GM12878 (cell line): ENCODE measurements at regions of chr1 and their contacts with region 1.

Region 1: DNA sequence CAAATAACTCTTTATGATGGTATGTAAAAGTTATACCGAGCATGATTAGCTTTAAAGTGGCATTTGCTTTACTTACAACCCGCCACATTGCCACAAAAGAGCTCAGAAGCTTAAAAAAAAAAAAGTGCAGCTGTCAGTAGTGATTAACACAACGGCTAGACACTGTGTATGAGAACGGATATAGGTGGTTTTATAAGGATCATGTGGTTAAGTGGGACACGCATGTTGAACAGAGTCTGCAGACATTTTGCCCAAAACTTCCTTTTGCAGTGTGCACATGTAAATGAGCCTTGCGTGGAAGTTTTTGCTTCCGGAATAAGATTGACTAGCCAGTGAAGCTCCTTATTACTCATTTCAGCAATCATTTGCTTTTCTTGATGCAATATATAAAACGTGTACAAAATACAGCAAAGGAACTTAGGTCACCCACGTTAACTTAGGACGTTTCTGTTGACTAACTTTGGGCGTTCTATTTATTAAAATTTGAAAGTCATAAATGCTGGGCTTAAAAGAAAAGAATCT is 58.7 kb upstream of the RGS1 start:
- DNase-seq: peak; percentile 99
- ATAC-seq: peak; percentile 87
- H3K4me3 ChIP-seq: 0 out of 2 replicates have a peak overlapping the region, but pooled peaks have one; percentile 34
- H3K27ac ChIP-seq: peak overlapping the region; percentile 72
- H3K4me1 ChIP-seq: peaks cover 22% of the 10 kb centered on the region; the same call in 1 of the 2 replicates
- H3K27me3 ChIP-seq: no peaks in the 10 kb centered on the region
- CTCF ChIP-seq: no peak
- EP300 ChIP-seq: peak; percentile 99
- POLR2A ChIP-seq: no peak
- RAD21 ChIP-seq: peak; percentile 14; the same call in 1 of the 2 replicates

Region 2: DNA sequence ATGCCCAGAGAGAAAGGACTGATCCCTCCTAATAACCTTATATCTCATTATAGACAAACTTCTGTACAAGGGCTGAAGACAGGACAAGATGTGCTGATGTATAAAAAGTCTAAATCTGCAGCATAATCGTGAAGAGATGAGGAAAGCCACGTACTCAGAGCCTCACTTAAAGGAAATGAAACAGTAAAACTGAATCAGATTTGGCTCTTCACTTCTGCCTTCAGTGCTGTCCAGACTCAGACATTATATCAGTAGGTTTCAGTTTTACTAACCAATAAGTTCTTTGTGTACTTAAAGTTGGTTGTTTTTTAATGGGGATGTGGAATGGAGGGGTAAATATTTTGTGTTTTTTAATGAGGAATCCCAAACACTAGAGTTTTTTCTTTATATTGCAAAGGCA is 13.4 kb after region 1 on chr1:
- CTCF ChIA-PET with region 1: interaction called, 5 read pairs
- POLR2A ChIA-PET with region 1: interaction called, 18 read pairs
- RAD21 ChIA-PET with region 1: interaction called, 10 read pairs
- SMC1A ChIA-PET with region 1: interaction called, 52 read pairs
- in situ Hi-C with region 1: no loop called
- intact Hi-C with region 1: loop called (anchors 1 kb)
- DNase-seq: peak; percentile 93
- ATAC-seq: peak; percentile 95
- H3K4me3 ChIP-seq: no peak overlapping the region
- H3K27ac ChIP-seq: peak overlapping the region; percentile 51; the same call in 1 of the 2 replicates
- H3K4me1 ChIP-seq: peaks cover 16% of the 10 kb centered on the region
- H3K27me3 ChIP-seq: no peaks in the 10 kb centered on the region; a peak in 1 of 4 replicates
- CTCF ChIP-seq: no peak
- EP300 ChIP-seq: peak; percentile 81 to 92; a peak in 3 of 4 replicates
- POLR2A ChIP-seq: no peak
- RAD21 ChIP-seq: no peak; the same call in 1 of the 2 replicates

Region 3: DNA sequence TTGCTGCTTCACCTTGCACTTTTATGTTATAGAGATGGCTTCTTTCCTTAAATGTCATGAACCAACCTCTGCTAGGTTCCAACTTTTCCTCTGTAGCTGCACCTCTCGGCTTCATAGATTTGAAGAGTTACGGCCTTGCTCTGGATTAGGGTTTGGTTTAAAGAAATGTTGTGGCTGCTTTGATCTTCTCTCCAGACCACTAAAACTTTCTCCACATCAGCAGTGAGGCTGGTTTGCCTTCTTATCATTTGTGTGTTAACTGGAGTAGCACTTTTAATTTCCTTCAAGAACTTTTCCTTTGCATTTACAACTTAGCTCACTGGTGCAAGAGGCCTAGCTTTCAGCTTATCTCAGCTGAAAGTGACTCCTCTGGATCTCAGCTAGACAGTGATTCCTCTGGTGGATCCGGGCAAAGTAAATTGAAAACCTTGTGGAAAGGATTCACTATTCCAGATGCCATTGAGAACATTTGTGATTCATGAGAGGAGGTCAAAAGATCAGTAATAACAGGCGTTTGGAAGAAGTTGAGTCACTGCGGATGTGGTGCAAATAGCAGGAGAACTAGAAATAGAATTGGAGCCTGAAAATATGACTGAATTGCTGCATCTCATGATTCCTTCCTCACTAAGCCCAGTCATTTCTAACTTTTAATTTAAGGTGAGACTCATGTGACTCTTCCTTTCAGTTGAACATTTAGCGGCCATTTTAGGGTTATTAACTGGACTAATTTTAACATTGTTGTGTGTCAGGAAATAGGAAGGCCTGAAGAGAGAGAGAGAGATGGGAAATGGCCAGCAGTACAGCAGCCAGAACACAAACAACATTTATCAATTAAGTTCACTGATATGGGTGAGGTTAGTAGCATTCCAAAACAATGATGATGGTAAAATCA is 42.5 kb after region 1 on chr1:
- CTCF ChIA-PET with region 1: interaction called, 6 read pairs
- POLR2A ChIA-PET with region 1: interaction called, 123 read pairs
- RAD21 ChIA-PET with region 1: interaction called, 170 read pairs
- SMC1A ChIA-PET with region 1: interaction called, 50 read pairs
- in situ Hi-C with region 1: no loop called
- intact Hi-C with region 1: no loop called
- DNase-seq: no peak
- ATAC-seq: peak; percentile 54
- H3K4me3 ChIP-seq: peak overlapping the region; percentile 23; the same call in 1 of the 2 replicates
- H3K27ac ChIP-seq: peak overlapping the region; percentile 79
- H3K4me1 ChIP-seq: peaks cover 3% of the 10 kb centered on the region; the same call in 1 of the 2 replicates
- H3K27me3 ChIP-seq: no peaks in the 10 kb centered on the region
- CTCF ChIP-seq: no peak
- EP300 ChIP-seq: peak; percentile 93 to 99
- POLR2A ChIP-seq: no peak
- RAD21 ChIP-seq: peak; percentile 14; the same call in 1 of the 2 replicates

Region 4: GRCh38 chr1:192573499-192573898 is 56.7 kb after region 1 on chr1:
- CTCF ChIA-PET with region 1: interaction called, 14 read pairs
- POLR2A ChIA-PET with region 1: interaction called, 14 read pairs
- RAD21 ChIA-PET with region 1: interaction called, 21 read pairs
- SMC1A ChIA-PET with region 1: interaction called, 38 read pairs
- in situ Hi-C with region 1: no loop called
- intact Hi-C with region 1: loop called (anchors 1 kb)
- DNase-seq: no peak
- ATAC-seq: no peak
- H3K4me3 ChIP-seq: no peak overlapping the region
- H3K27ac ChIP-seq: no peak overlapping the region
- H3K4me1 ChIP-seq: peaks cover 3% of the 10 kb centered on the region; the same call in 1 of the 2 replicates
- H3K27me3 ChIP-seq: no peaks in the 10 kb centered on the region
- CTCF ChIP-seq: no peak
- EP300 ChIP-seq: no peak
- POLR2A ChIP-seq: no peak
- RAD21 ChIP-seq: no peak